ENCODE measurements at regions of chr14 and their contacts with region 1.

Region 1: GRCh38 chr14:101809671-101810514 is 48.4 kb downstream of the PPP2R5C start:
- DNase-seq: peak; percentile 95
- H3K4me3 ChIP-seq: peak overlapping the region; percentile 57 to 83 (median 80)
- H3K27ac ChIP-seq: peak overlapping the region; percentile 89
- H3K4me1 ChIP-seq: peaks cover 16% of the 10 kb centered on the region
- H3K27me3 ChIP-seq: no peaks in the 10 kb centered on the region
- CTCF ChIP-seq: no peak
- POLR2A ChIP-seq: peak; percentile 62

Region 2: DNA sequence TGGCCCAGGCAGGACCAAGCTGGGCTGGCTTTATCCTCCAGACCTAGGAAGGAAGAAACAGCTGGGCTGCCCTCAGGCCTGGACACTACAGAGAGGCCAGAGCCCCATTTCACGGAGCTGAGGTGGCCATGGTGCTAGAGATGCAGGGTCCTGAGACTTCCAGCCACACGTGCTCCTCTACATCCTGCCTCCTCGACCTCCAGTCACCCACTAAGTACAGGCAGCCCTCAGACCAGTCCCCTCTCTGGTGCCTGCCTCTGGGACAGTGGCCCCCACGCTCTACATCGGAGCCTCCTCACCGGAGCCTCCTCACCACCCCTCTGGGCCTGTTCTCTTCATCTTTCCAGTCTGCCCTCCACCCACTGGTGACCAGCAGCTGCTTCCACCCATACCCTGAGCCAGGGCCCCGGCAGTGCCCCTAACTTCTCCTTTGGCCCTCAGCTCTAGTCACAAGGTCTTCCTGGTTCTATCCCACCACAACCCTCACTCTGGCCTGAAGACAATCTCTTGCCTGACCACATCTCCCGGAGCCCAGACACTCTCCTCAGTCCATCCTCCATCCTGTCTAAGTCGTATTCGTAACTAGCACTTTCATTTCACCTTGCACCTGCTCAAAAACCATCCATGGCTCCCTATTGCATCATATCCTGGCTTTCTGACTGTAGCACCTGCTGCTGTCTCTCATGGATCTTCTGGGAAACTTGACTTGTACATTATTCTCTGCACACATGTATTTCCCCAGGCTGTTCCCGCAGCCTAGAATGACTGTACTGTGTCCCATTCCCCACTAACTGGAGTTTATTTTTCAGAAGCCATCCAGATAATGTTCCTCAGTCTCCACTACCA is 204.7 kb before region 1 on chr14:
- CTCF ChIA-PET with region 1: no interaction called
- POLR2A ChIA-PET with region 1: interaction called, 10 read pairs
- dilution Hi-C with region 1: no loop called
- intact Hi-C with region 1: no loop called
- DNase-seq: no peak
- H3K4me3 ChIP-seq: no peak overlapping the region
- H3K27ac ChIP-seq: no peak overlapping the region
- H3K4me1 ChIP-seq: no peaks in the 10 kb centered on the region
- H3K27me3 ChIP-seq: peaks cover 2 to 8% of the 10 kb centered on the region in 2 experiments
- CTCF ChIP-seq: no peak
- POLR2A ChIP-seq: no peak

Region 3: DNA sequence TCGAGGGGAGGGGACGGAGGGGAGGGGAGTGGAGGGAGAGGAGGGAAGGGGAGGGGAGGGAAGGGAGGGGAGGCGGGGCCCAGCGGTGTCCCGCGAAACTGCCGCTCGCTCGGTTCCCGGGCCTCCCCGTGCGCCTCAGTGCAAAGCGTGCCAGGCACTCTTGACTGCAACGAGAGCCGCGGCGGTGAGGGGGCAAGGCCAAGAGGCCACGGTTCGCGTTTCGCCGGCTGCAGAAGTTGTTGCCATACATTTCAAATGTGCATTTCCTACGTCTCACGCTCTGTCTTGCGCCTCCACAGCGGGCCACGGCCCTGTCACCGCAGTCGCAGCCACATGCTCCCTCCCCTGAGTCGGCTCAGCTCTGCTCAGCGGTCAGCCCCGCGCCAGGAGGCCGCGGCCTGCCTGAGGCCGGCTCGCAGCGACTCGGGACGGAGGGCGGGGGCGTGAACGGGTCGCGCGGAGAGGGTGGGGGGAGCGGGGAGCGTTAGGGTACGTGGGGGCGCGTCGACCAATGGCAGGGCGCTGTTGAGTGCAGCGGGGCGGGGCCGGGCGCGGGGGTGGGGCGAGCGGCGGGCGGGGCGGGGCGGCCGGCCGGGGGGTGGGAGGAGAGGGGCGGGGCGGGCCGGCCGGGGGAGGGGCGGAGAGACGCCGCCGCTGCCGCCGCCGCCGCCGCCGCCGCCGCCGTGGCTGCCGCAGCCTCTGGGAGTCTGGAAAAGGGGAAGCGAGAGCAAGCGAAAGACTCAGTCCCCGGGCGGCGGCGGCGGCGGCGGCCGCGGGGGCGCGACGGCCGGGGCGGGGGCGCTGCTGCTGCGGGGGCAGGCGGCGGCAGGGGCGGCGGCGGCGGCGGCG is 48.6 kb before region 1 on chr14 and contains the start of gene PPP2R5C:
- CTCF ChIA-PET with region 1: interaction called, 3 read pairs
- POLR2A ChIA-PET with region 1: interaction called, 9 read pairs
- dilution Hi-C with region 1: no loop called
- intact Hi-C with region 1: loop called (anchors 2 kb)
- DNase-seq: peak; percentile 83
- H3K4me3 ChIP-seq: peak within 1 kb of the TSS; percentile 50 to 64 (median 52)
- H3K27ac ChIP-seq: no peak within 1 kb of the TSS
- H3K4me1 ChIP-seq: peaks cover 6% of the 10 kb centered on the region
- H3K27me3 ChIP-seq: peaks cover 13 to 32% of the 10 kb centered on the region in 2 experiments
- CTCF ChIP-seq: no peak
- POLR2A ChIP-seq: no peak
- total RNA-seq, gene PPP2R5C: 83.6 and 89.0 TPM in 2 replicates

Region 4: DNA sequence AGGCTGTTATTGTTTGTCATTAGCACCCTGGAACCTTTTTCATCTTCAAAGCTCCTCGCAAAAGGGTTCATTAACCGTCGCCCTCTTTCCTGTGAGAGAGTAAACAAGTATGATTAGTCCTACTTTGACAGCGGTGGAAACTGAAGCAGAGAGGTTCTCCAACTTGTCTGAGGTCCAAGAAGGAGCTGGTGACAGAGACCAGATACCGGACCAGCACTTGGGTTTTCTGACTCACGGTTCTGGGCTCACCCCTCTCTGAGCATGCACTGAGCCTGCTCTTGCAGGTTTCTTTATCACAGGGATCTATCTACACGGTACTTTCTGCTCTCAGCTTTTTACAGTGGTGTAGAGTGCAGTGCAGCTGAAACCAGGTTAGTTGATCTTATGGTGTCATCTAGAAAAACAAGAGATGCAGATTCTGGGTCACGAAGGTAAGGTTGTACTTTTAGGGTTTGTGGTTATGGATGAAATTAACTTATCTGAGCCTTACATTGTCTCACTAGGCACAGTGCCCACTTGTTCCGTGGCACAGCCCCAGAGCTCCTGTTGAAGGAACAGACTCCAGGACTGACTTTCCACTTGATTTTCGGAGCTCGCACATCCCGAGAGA is 13.7 kb after region 1 on chr14:
- CTCF ChIA-PET with region 1: interaction called, 4 read pairs
- POLR2A ChIA-PET with region 1: interaction called, 12 read pairs
- dilution Hi-C with region 1: no loop called
- intact Hi-C with region 1: no loop called
- DNase-seq: peak; percentile 29
- H3K4me3 ChIP-seq: no peak overlapping the region
- H3K27ac ChIP-seq: no peak overlapping the region
- H3K4me1 ChIP-seq: no peaks in the 10 kb centered on the region
- H3K27me3 ChIP-seq: no peaks in the 10 kb centered on the region
- CTCF ChIP-seq: no peak
- POLR2A ChIP-seq: no peak

Region 5: DNA sequence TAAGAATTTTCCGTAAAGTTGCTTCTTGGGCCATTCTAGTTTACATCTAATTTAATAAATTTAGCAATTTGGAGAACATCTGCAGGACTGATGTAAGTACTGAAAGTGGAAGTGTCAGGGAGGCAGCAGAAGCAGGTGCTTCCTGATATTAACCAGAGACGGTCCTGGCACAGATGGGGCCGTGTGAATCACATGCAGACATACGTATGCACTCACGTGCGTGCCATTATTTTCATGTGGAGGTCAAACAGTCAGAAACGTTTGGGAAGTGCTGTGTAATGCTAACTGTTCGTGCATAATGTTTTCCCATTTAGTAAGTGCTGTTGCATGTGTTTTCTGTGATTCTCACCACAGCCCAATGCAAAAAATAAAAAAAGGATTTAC is 66.7 kb after region 1 on chr14:
- CTCF ChIA-PET with region 1: no interaction called
- POLR2A ChIA-PET with region 1: no interaction called
- dilution Hi-C with region 1: no loop called
- intact Hi-C with region 1: loop called (anchors 1 kb)
- DNase-seq: peak; percentile 99
- H3K4me3 ChIP-seq: no peak overlapping the region
- H3K27ac ChIP-seq: peak overlapping the region; percentile 70
- H3K4me1 ChIP-seq: peaks cover 20% of the 10 kb centered on the region
- H3K27me3 ChIP-seq: no peaks in the 10 kb centered on the region
- CTCF ChIP-seq: no peak
- POLR2A ChIP-seq: no peak

Region 6: GRCh38 chr14:101947906-101948665 is 138.2 kb after region 1 on chr14:
- CTCF ChIA-PET with region 1: interaction called, 3 read pairs
- POLR2A ChIA-PET with region 1: interaction called, 7 read pairs
- dilution Hi-C with region 1: no loop called
- intact Hi-C with region 1: loop called (anchors 1 kb)
- DNase-seq: peak; percentile 100
- H3K4me3 ChIP-seq: peak overlapping the region; percentile 34 to 74 (median 53)
- H3K27ac ChIP-seq: peak overlapping the region; percentile 80
- H3K4me1 ChIP-seq: peaks cover 10% of the 10 kb centered on the region
- H3K27me3 ChIP-seq: peaks cover 6 to 8% of the 10 kb centered on the region in 2 experiments
- CTCF ChIP-seq: no peak
- POLR2A ChIP-seq: peak; percentile 88